GM12878 (cell line): ENCODE measurements at regions of chr11 and their contacts with region 1.

Region 1: DNA sequence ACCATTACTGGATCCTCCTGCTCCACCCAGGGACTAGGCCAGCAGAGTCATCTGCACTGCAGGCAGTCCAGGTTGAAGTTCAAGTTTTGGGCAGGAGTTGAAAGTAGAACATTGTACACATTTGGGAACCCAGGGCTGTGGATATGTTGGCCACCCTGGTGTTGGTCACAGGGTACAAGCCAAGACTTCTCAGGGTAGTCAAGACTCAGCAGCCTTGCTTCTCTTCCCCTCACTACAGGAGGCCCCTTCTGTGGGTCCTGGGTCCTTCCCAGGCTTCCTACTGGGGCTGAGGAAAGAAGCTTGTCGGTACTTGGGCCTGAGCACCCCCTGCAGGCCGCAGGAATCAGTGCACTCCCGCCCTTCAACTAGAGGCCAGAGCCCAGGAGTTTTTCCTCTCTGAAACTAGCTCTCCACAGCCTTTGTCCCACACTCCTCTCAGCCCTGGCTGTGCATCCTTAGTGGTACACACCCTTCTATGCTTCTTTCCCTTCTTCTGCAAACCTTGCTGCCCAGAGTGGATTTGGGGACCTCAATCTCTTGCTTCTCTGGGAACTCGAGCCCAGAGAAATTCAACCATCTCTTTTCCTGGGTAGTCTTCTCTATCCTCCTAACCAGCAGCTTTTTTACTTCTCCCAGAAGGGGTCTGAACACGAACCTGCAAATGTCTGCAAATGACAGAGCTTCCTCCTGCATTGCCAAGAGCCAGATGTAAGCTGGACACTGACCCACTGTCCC is 2.6 kb upstream of the HPX start:
- DNase-seq: no peak
- ATAC-seq: peak; percentile 91
- H3K4me3 ChIP-seq: no peak overlapping the region
- H3K27ac ChIP-seq: no peak overlapping the region
- H3K4me1 ChIP-seq: no peaks in the 10 kb centered on the region
- H3K27me3 ChIP-seq: no peaks in the 10 kb centered on the region
- CTCF ChIP-seq: peak; percentile 85 to 89 (median 87)
- EP300 ChIP-seq: no peak
- POLR2A ChIP-seq: no peak
- RAD21 ChIP-seq: peak; percentile 91

Region 2: DNA sequence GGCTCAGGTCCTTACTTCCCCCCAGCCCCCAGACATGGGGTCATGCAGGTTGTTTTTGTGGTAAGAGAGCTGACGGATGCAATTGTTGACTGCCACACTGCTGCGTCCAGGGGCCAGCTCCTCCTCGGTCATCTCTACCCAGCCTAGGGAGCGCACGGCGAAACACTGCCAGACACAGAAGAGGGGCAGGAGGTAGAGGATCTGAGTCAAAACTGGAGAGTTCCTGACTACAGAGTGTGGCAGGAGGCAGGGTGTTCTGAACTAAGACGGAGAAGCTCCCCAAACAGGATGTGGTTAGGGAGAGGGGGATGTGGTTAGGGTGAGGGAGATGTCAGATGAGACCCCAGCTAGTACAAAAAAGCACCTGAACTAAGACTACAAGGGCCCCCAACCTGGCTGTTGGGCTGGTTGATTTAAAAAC is 40.9 kb before region 1 on chr11:
- CTCF ChIA-PET with region 1: interaction called, 13 read pairs
- POLR2A ChIA-PET with region 1: no interaction called
- RAD21 ChIA-PET with region 1: interaction called, 11 read pairs
- SMC1A ChIA-PET with region 1: interaction called, 5 read pairs
- in situ Hi-C with region 1: no loop called
- intact Hi-C with region 1: no loop called
- DNase-seq: peak; percentile 76
- ATAC-seq: peak; percentile 94
- H3K4me3 ChIP-seq: peak overlapping the region; percentile 54; the same call in 1 of the 2 replicates
- H3K27ac ChIP-seq: peak overlapping the region; percentile 16
- H3K4me1 ChIP-seq: peaks cover 25% of the 10 kb centered on the region
- H3K27me3 ChIP-seq: no peaks in the 10 kb centered on the region
- CTCF ChIP-seq: no peak
- EP300 ChIP-seq: peak; percentile 47 to 65; a peak in 2 of 4 replicates
- POLR2A ChIP-seq: peak; percentile 58
- RAD21 ChIP-seq: no peak

Region 3: DNA sequence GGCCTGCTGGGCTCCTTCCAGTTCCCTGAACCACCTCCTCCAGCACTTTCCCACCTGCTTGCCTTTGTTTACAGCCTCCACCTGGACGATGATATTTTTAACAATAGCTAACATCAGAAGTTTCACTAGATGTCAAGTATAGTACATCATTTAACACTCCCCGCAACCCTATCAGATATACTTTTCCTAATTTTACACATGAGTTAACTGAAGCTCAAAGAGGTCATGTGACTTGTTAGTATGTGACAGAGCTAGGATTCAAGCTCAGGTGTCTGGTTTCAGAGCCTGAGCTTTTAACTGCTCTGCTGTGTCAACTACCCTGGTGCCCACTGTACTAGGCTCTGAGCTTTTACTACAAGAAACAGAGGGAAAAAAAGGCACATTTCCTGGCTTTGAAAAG is 11.6 kb after region 1 on chr11:
- CTCF ChIA-PET with region 1: interaction called, 23 read pairs
- POLR2A ChIA-PET with region 1: no interaction called
- RAD21 ChIA-PET with region 1: interaction called, 8 read pairs
- SMC1A ChIA-PET with region 1: interaction called, 4 read pairs
- in situ Hi-C with region 1: no loop called
- intact Hi-C with region 1: no loop called
- DNase-seq: no peak
- ATAC-seq: no peak
- H3K4me3 ChIP-seq: no peak overlapping the region
- H3K27ac ChIP-seq: no peak overlapping the region
- H3K4me1 ChIP-seq: no peaks in the 10 kb centered on the region
- H3K27me3 ChIP-seq: no peaks in the 10 kb centered on the region
- CTCF ChIP-seq: no peak
- EP300 ChIP-seq: no peak
- POLR2A ChIP-seq: no peak
- RAD21 ChIP-seq: no peak

Region 4: DNA sequence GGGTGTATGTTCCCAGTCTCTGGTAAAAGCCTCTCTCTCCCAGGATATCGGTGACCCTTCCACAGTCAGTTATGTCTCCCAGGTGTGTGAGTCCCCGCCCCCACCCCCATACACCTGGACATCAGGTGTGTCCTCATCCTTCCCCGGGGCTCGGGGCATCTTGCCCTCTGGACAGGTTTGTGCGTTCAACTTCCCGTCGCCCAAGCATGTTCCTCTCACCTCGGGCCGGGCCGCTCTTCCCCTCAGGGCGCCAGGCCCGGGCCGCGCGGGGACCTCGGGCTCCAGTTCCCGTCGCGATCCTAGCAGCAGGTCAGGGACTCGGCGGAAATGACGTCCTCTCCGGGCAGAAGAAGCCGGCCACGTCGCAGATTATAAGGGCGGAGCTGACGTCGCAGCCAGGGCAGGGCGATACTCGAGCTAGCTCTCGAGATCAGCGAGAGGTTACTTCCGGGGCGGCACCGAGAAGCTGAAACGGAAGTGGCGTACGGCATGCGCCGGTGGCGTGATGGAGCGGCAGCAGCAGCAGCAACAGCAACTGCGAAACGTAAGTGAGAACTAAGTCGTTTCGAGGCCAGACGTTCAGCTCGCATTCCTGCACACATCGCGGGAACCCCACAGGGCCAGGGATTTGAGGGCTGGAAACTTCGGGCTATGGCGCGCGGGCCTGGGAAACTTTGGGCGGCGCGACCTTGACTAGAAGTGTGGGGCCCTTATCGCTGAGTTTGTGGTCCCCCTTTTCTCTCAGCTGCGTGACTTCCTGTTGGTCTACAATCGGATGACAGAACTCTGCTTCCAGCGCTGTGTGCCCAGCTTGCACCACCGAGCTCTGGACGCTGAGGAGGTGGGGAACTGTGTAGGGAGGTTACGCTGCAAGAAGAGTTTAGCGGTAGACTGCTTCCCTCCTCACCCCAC is 37.8 kb after region 1 on chr11 and contains the starts of genes ARFIP2 and TIMM10B:
- CTCF ChIA-PET with region 1: interaction called, 11 read pairs
- POLR2A ChIA-PET with region 1: no interaction called
- RAD21 ChIA-PET with region 1: interaction called, 4 read pairs
- SMC1A ChIA-PET with region 1: interaction called, 3 read pairs
- in situ Hi-C with region 1: no loop called
- intact Hi-C with region 1: no loop called
- DNase-seq: peak; percentile 91
- ATAC-seq: peak; percentile 98
- H3K4me3 ChIP-seq: peak within 1 kb of the TSS; percentile 98
- H3K27ac ChIP-seq: peak within 1 kb of the TSS; percentile 80
- H3K4me1 ChIP-seq: peaks cover 19% of the 10 kb centered on the region
- H3K27me3 ChIP-seq: no peaks in the 10 kb centered on the region
- CTCF ChIP-seq: no peak
- EP300 ChIP-seq: no peak
- POLR2A ChIP-seq: peak; percentile 98
- RAD21 ChIP-seq: no peak
- polyA plus RNA-seq, gene ARFIP2: 11.7 to 18.9 TPM
- polyA plus RNA-seq, gene TIMM10B: 93.3 to 126 TPM

Region 5: DNA sequence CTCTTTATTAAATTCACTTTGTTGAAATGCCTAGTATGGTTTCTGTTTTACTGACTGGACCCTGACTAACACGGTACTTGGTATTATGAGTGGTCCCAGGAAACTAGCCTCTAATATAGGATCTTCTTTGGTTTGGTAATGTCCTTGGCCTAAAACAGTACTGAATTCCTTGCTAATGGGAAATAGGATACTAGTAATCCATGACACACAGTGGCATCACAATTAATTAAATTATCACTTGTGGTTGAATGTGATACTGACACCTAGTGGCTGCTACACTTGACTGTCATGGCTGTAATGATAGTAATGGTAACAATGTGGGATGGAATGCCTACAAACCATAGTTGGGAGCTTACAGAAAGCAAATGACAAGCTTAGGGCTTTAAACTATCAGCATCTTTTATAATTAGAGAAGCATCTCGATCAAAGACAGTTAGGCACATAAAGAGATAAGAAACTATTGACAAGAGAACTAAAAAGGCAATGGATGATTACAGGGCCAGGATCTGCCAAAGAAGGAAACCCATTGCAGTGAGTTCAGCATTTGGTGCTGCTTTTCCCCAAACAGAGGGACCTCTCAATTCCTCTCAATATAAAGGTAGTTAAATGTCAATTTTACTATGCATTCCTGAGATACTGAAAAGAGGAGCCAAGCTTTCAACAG is 62.3 kb after region 1 on chr11:
- CTCF ChIA-PET with region 1: interaction called, 83 read pairs
- POLR2A ChIA-PET with region 1: no interaction called
- RAD21 ChIA-PET with region 1: interaction called, 29 read pairs
- SMC1A ChIA-PET with region 1: interaction called, 24 read pairs
- in situ Hi-C with region 1: no loop called
- intact Hi-C with region 1: loop called (anchors 1 kb)
- DNase-seq: no peak
- ATAC-seq: peak; percentile 91
- H3K4me3 ChIP-seq: no peak overlapping the region
- H3K27ac ChIP-seq: no peak overlapping the region
- H3K4me1 ChIP-seq: no peaks in the 10 kb centered on the region
- H3K27me3 ChIP-seq: no peaks in the 10 kb centered on the region
- CTCF ChIP-seq: peak; percentile 66 to 71 (median 69); a peak in 5 of 6 replicates
- EP300 ChIP-seq: no peak
- POLR2A ChIP-seq: no peak
- RAD21 ChIP-seq: peak; percentile 58

Region 6: DNA sequence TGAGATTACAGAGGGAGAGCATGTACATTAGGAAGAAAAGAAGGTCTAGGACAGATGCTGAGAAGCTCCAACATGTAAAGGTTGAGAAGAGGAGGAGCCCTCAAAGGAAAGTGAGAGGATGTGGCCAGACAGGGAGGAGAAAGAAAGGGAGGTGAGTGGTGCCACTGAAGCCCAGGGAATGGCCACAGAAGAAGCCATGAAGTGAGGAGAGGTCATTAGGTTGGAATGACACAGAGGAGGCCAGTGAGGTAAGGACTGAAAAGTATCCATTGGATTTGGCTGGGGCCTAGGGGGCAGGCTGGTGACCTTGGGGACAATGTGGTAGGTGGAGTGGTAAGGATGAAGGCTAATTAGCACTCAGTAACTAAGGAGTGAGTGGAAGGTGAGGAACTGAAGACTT is 215.2 kb after region 1 on chr11:
- CTCF ChIA-PET with region 1: no interaction called
- POLR2A ChIA-PET with region 1: no interaction called
- RAD21 ChIA-PET with region 1: no interaction called
- SMC1A ChIA-PET with region 1: no interaction called
- in situ Hi-C with region 1: no loop called
- intact Hi-C with region 1: no loop called
- DNase-seq: no peak
- ATAC-seq: no peak
- H3K4me3 ChIP-seq: no peak overlapping the region
- H3K27ac ChIP-seq: no peak overlapping the region
- H3K4me1 ChIP-seq: no peaks in the 10 kb centered on the region
- H3K27me3 ChIP-seq: peaks cover 4% of the 10 kb centered on the region in 2 experiments
- CTCF ChIP-seq: no peak
- EP300 ChIP-seq: no peak
- POLR2A ChIP-seq: no peak
- RAD21 ChIP-seq: no peak